ENCODE measurements at regions of chr1 and their contacts with region 1.

Region 1: DNA sequence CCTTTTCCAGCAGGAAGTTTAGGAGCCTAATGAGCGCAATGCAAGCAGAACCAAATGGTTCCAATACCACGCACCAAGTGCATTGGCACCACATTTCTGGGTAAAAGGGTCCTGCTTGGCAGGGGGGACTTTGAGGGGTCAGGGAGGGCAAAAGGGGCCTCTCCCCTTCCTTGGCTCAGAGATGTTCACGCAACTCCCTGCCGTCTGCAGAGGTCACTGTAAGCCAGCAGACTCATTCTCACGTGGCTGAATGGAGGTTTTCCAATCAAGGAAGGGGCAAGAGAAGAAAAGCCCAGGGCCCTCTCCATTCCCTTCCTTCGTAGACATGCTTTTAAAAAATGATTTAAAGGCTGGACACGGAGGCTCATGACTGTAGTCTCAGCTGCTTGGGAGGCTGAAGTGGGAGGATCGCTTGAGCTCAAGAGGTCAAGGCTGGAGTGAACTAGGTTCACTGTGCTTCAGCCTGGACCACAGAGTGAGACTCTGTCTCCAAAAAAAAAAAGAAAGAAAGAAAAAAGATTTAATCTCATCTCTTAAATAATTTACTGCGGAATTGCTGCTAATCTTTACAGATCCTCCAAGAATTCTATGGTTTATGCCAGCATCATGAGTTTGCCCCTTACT is 80.3 kb downstream of the RUNX3 start:
- DNase-seq: no peak
- H3K4me3 ChIP-seq: no peak overlapping the region
- H3K27ac ChIP-seq: no peak overlapping the region
- H3K4me1 ChIP-seq: peaks cover 0 to 21% (median 16%) of the 10 kb centered on the region in 4 donors
- H3K27me3 ChIP-seq: no peaks in the 10 kb centered on the region
- CTCF ChIP-seq: no peak

Region 2: DNA sequence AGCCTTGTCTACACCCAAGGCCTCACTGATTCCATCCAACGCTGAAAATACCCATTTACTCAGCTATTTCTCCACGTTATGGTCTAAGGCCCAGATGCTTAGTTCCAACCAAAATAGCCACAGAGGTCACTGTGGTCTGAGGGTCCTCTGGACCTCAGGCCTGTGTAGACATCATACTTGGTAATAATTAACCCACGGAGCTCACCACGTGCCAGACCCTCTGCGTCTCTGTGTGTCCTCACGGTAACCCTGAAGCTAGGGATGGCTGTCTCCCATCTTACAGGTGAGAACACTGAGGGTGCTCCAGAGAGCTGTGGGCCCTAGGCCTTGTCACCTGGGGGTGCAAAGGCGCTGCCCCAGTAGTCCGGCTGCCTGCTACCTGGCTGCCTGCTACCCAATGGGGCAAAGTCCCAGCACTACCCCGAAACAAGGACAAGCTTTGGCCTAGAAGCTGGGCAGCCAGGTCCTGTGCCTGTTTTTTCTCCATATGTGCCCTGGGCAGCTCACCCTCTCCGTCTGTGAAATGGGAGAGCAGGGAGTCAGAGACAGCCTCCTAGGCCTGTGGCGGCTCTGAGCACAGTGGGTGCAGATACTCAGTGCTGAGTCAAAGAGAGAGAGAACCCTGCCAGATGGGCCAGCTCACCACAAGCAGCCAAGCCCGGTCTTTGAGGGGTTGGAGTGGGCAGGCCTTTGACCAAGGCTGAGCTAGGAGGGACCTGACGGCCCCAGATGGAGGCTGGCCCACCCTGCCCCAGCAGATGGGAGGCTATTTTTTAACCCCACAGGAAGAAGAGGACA is 97.3 kb after region 1 on chr1:
- intact Hi-C with region 1: loop called (anchors 10 kb)
- DNase-seq: no peak
- H3K4me3 ChIP-seq: no peak overlapping the region
- H3K27ac ChIP-seq: no peak overlapping the region
- H3K4me1 ChIP-seq: no peaks in the 10 kb centered on the region
- H3K27me3 ChIP-seq: peaks cover 0 to 22% of the 10 kb centered on the region in 2 donors
- CTCF ChIP-seq: no peak

Region 3: GRCh38 chr1:25037174-25038074 is 187.6 kb after region 1 on chr1:
- intact Hi-C with region 1: loop called (anchors 10 kb)
- DNase-seq: no peak
- H3K4me3 ChIP-seq: no peak overlapping the region
- H3K27ac ChIP-seq: no peak overlapping the region
- H3K4me1 ChIP-seq: no peaks in the 10 kb centered on the region
- H3K27me3 ChIP-seq: peaks cover 0 to 42% of the 10 kb centered on the region in 2 donors
- CTCF ChIP-seq: peak in 1 of 2 experiments; percentile 19

Region 4: GRCh38 chr1:25167331-25168199 is 317.8 kb after region 1 on chr1:
- intact Hi-C with region 1: no loop called
- DNase-seq: no peak
- H3K4me3 ChIP-seq: no peak overlapping the region
- H3K27ac ChIP-seq: no peak overlapping the region
- H3K4me1 ChIP-seq: no peaks in the 10 kb centered on the region
- H3K27me3 ChIP-seq: peaks cover 0 to 3% of the 10 kb centered on the region in 2 donors
- CTCF ChIP-seq: no peak

Region 5: GRCh38 chr1:25204797-25205480 is 355.2 kb after region 1 on chr1:
- intact Hi-C with region 1: loop called (anchors 5 kb)
- DNase-seq: no peak
- H3K4me3 ChIP-seq: no peak overlapping the region
- H3K27ac ChIP-seq: no peak overlapping the region
- H3K4me1 ChIP-seq: peaks cover 0 to 2% (median 0%) of the 10 kb centered on the region in 4 donors
- H3K27me3 ChIP-seq: peaks cover 0 to 4% of the 10 kb centered on the region in 2 donors
- CTCF ChIP-seq: peak; percentile 63 to 74